B cell (primary cell): ENCODE measurements at regions of chrX and their contacts with region 1.

Region 1: DNA sequence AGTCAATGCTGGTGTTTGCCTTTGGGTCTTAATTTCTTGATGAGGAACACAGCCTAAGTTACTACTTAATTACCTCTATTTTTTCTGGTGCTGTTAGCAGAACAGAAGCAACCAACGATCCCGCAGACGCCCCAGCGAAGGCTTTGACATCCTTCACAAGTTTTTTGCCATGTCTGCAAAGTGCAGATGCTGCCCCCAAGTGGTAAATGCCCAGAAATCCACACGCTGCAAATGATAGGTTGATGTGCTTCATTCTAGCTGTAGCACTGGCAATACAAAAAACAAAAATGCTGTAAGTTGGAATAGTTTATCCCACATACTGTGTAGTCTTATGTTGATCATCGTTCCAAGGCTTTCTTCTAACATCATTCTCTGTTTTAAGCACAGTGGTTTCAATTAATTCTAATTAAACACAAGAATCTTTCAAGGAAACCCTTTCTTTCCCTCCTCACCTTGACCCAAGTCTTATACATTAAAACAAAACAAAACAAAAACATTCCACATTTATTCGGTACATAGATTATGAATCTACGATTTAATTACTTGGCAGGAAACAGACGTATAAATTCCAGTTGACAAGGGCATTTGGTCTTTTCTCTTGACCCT is 1.2 kb downstream of the PNPLA4 start:
- DNase-seq: peak; percentile 67
- ATAC-seq: no peak
- H3K4me3 ChIP-seq: no peak overlapping the region
- H3K4me3 Mint-ChIP-seq: peak overlapping the region; percentile 96
- H3K27ac ChIP-seq: peak overlapping the region in 1 of 2 donors; percentile 91
- H3K27ac Mint-ChIP-seq: peak overlapping the region; percentile 48
- H3K4me1 ChIP-seq: peaks cover 8 to 14% of the 10 kb centered on the region in 2 donors
- H3K4me1 Mint-ChIP-seq: peaks cover 10% of the 10 kb centered on the region
- H3K27me3 ChIP-seq: no peaks in the 10 kb centered on the region
- H3K27me3 Mint-ChIP-seq: no peaks in the 10 kb centered on the region
- CTCF ChIP-seq: peak; percentile 77

Region 2: DNA sequence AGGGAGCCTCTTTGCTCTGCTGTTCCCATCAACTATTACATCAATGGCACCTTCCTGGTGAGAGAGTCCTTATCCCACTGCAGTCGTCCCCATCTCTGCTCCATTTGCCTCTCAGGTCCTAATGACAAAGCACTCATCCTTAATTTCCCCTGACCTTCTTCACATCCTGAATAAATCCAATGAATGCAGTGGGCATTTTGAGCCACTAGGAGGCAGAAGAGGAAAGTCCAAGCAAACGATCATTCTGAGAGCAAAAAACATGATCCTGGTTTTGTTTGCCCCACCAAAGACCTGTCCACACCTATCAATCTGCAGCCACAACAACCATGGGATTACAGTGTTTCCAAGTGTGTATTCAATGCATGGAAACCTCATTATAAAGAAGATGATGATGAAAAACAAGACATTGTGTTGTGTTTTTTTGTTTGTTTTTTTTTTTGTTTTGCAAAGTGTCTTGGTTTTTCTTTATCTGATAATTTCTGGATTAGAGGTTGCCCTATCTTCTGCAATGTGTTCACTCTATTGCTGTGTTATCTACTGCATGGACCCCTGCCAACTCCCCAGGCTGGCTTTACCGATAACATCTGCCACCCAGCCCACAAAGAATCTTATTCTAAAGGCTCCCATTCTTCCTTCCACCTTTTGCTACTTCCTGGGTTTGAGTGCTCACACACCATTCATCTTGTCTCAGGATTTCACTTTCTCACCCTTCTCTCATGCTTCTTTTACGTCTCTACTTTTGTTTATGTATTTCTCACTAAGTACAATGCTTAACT is 1904.5 kb before region 1 on chrX:
- CTCF ChIA-PET with region 1: no interaction called
- POLR2A ChIA-PET with region 1: no interaction called
- intact Hi-C with region 1: loop called (anchors 2 kb)
- DNase-seq: peak; percentile 46
- ATAC-seq: no peak
- H3K4me3 ChIP-seq: no peak overlapping the region
- H3K4me3 Mint-ChIP-seq: no peak overlapping the region
- H3K27ac ChIP-seq: no peak overlapping the region
- H3K27ac Mint-ChIP-seq: peak overlapping the region; percentile 0
- H3K4me1 ChIP-seq: no peaks in the 10 kb centered on the region
- H3K4me1 Mint-ChIP-seq: no peaks in the 10 kb centered on the region
- H3K27me3 ChIP-seq: no peaks in the 10 kb centered on the region
- H3K27me3 Mint-ChIP-seq: peaks cover 11% of the 10 kb centered on the region
- CTCF ChIP-seq: peak; percentile 69

Region 3: DNA sequence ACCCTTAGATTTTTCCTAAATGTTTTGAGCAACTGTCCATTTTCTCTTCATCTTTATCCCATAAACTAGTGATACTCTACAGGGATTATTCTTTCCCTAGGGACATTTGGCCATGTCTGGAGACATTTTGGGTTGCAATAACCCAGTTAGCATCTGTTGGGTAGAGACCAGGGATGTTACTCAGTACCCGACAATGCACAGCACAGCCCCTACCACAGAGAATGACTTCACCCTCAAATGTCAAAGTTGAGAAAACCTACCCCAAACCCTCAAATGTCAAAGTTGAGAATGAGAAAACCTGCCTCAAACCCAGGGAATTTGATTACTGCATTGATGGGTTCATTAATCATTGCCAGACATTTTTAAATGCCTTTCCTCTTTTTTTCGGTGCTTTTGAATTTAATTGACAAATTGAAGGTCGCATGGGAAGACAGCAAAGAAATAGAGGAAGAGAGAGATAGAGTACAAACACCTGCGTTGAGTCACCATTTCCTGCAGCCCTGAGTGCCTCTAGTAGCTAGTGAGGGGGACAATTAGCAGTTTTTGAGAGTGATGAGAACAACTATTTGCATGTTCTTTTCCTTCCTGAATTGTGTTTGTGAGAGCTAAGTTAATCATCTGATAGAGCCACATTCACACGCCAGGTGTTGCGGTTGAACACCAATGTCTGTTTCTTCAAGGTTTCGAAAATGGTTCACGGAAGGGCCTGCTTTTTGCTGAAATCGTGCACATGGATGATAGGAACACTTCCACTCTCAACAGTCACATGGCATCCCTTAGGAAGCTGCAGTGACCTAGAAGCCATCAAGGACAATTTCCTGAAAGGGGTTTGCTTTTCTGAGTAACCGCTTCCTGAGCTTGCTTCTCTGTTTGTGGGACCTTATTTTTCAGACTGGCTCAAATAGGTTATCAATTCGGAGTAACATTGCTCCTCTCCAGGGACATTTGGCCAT is 1187.2 kb before region 1 on chrX:
- CTCF ChIA-PET with region 1: no interaction called
- POLR2A ChIA-PET with region 1: no interaction called
- intact Hi-C with region 1: loop called (anchors 5 kb)
- DNase-seq: peak; percentile 80
- ATAC-seq: peak; percentile 93
- H3K4me3 ChIP-seq: peak overlapping the region in 1 of 5 experiments; percentile 3
- H3K4me3 Mint-ChIP-seq: peak overlapping the region; percentile 44
- H3K27ac ChIP-seq: peak overlapping the region; percentile 52 to 60
- H3K27ac Mint-ChIP-seq: peak overlapping the region; percentile 79
- H3K4me1 ChIP-seq: peaks cover 22 to 28% of the 10 kb centered on the region in 2 donors
- H3K4me1 Mint-ChIP-seq: peaks cover 30% of the 10 kb centered on the region
- H3K27me3 ChIP-seq: no peaks in the 10 kb centered on the region
- H3K27me3 Mint-ChIP-seq: no peaks in the 10 kb centered on the region
- CTCF ChIP-seq: no peak

Region 4: GRCh38 chrX:7083468-7084396 is 842.2 kb before region 1 on chrX:
- CTCF ChIA-PET with region 1: no interaction called
- POLR2A ChIA-PET with region 1: no interaction called
- intact Hi-C with region 1: loop called (anchors 2 kb)
- DNase-seq: peak; percentile 82
- ATAC-seq: peak; percentile 85
- H3K4me3 ChIP-seq: peak overlapping the region in 2 of 5 experiments; percentile 28 to 30
- H3K4me3 Mint-ChIP-seq: peak overlapping the region; percentile 70
- H3K27ac ChIP-seq: peak overlapping the region; percentile 67 to 73
- H3K27ac Mint-ChIP-seq: peak overlapping the region; percentile 88
- H3K4me1 ChIP-seq: peaks cover 53 to 61% of the 10 kb centered on the region in 2 donors
- H3K4me1 Mint-ChIP-seq: peaks cover 69% of the 10 kb centered on the region
- H3K27me3 ChIP-seq: no peaks in the 10 kb centered on the region
- H3K27me3 Mint-ChIP-seq: no peaks in the 10 kb centered on the region
- CTCF ChIP-seq: no peak

Region 5: DNA sequence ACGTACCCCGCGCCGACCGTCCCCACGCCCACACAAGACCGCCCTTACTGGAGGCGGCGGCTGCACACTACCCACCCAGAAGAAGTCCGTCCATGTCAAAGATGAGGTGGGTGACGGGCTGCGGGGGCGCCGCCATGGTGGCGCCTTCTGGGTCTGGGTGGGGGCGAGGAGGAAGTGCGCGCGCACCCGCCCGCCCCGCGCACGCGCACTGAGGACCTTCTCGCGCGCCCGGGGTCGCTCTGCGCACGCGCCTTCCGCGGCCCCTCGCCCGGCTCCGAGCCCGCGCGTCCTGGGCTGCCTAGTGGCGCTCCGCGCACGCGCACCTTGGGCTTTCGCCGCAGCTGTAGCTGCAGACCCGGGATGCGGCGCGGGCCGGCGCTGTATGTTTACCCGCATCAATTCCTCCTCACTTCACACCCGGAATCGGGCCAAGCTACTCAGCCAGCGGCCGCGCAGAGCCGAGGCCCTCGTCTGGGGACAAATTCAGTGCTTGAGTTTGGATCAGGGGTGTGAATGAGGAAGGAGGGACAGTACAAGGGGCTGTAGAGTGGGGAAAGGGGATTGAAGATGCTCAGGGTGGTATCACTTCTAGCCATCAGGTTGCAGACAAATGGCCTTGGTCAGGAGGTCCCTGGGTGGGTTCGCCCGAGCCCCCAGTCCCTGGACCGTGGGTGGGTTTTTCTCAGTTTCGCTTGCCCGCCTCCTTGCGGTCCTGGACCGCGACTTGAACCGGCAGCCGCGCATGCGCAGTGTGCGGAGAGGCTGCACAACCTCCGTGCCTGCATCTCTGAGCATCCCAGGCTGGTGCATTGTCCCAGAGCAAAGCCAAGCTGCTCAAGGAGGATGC is 777.8 kb before region 1 on chrX and contains the start of gene PUDP:
- CTCF ChIA-PET with region 1: no interaction called
- POLR2A ChIA-PET with region 1: no interaction called
- intact Hi-C with region 1: loop called (anchors 10 kb)
- DNase-seq: peak; percentile 92
- ATAC-seq: peak; percentile 82
- H3K4me3 ChIP-seq: peak within 1 kb of the TSS; percentile 59 to 100 (median 95)
- H3K4me3 Mint-ChIP-seq: peak within 1 kb of the TSS; percentile 92
- H3K27ac ChIP-seq: peak within 1 kb of the TSS; percentile 76 to 88
- H3K27ac Mint-ChIP-seq: peak within 1 kb of the TSS; percentile 93
- H3K4me1 ChIP-seq: peaks cover 10 to 13% of the 10 kb centered on the region in 2 donors
- H3K4me1 Mint-ChIP-seq: peaks cover 14% of the 10 kb centered on the region
- H3K27me3 ChIP-seq: no peaks in the 10 kb centered on the region
- H3K27me3 Mint-ChIP-seq: no peaks in the 10 kb centered on the region
- CTCF ChIP-seq: no peak
- total RNA-seq, gene PUDP: 13.1 and 14.1 TPM in 2 replicates